ENCODE measurements at regions of chr6 and their contacts with region 1.

Region 1: GRCh38 chr6:143689848-143690247 is 12.1 kb downstream of the PHACTR2 start:
- DNase-seq: no peak
- H3K4me3 ChIP-seq: peak overlapping the region in 1 of 4 experiments; percentile 21; a peak in 2 of 8 replicates
- H3K27ac ChIP-seq: 0 out of 2 replicates have a peak overlapping the region, but pooled peaks have one; percentile 3
- H3K4me1 ChIP-seq: peaks cover 2 to 26% (median 18%) of the 10 kb centered on the region in 4 experiments; a peak in 6 of 7 replicates
- H3K27me3 ChIP-seq: no peaks in the 10 kb centered on the region
- CTCF ChIP-seq: no peak
- EP300 ChIP-seq: no peak
- POLR2A ChIP-seq: no peak
- RAD21 ChIP-seq: no peak

Region 2: GRCh38 chr6:143677891-143678791 is 11.7 kb before region 1 on chr6 and contains the start of gene PHACTR2:
- CTCF ChIA-PET with region 1: no interaction called
- POLR2A ChIA-PET with region 1: interaction called, 20 read pairs
- DNase-seq: peak; percentile 71 to 82
- H3K4me3 ChIP-seq: peak within 1 kb of the TSS; percentile 75 to 90 (median 82)
- H3K27ac ChIP-seq: peak within 1 kb of the TSS; percentile 90; the same call in 1 of the 2 replicates
- H3K4me1 ChIP-seq: peaks cover 0 to 33% (median 13%) of the 10 kb centered on the region in 4 experiments
- H3K27me3 ChIP-seq: no peaks in the 10 kb centered on the region
- CTCF ChIP-seq: no peak
- EP300 ChIP-seq: no peak
- POLR2A ChIP-seq: peak; percentile 59 to 84
- RAD21 ChIP-seq: no peak; a peak in 1 of 4 replicates
- total RNA-seq, gene PHACTR2: 131 and 136 TPM in 2 replicates